ENCODE measurements at regions of chr22 and their contacts with region 1.

Region 1: DNA sequence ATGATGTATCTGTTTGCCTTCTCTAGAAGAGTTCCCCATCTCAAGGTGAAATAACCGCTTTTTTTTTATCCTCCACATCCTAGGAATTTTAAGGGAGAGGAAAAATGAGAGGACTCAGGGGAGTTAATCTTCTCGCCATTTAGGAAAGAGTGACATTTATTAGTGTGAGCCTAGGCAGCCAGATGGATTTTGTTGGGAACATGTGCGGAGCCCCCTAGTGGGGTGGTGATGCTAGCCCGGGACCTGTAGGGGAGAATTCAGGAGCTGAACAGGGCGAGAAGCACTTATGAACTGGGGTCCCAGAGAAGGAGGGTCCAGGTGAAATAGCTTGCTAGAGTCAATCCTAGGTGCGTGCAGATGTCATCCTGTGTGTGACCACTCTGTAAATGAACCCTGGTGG is 10.7 kb downstream of the IL17RA start:
- DNase-seq: no peak
- H3K4me3 ChIP-seq: no peak overlapping the region
- H3K27ac ChIP-seq: no peak overlapping the region
- H3K4me1 ChIP-seq: no peaks in the 10 kb centered on the region
- H3K27me3 ChIP-seq: no peaks in the 10 kb centered on the region
- CTCF ChIP-seq: peak; percentile 51

Region 2: GRCh38 chr22:17149076-17149810 is 53.7 kb after region 1 on chr22:
- intact Hi-C with region 1: loop called (anchors 10 kb)
- DNase-seq: no peak
- H3K4me3 ChIP-seq: no peak overlapping the region
- H3K27ac ChIP-seq: no peak overlapping the region
- H3K4me1 ChIP-seq: peaks cover 44% of the 10 kb centered on the region
- H3K27me3 ChIP-seq: no peaks in the 10 kb centered on the region
- CTCF ChIP-seq: no peak

Measured in left ventricle myocardium inferior (tissue), 1 donor.